K562 (cell line): ENCODE measurements at regions of chr9 and their contacts with region 1.

Region 1: GRCh38 chr9:98192503-98193335 is at the start of gene CORO2A:
- DNase-seq: peak; percentile 90 to 97 (median 96)
- ATAC-seq: peak; percentile 88
- H3K4me3 ChIP-seq: peak within 1 kb of the TSS; percentile 85
- H3K27ac ChIP-seq: peak within 1 kb of the TSS; percentile 60
- H3K4me1 ChIP-seq: peaks cover 28 to 31% of the 10 kb centered on the region in 2 experiments; a peak in 4 of 5 replicates
- H3K27me3 ChIP-seq: no peaks in the 10 kb centered on the region
- CTCF ChIP-seq: peak; percentile 79 to 84 (median 82)
- EP300 ChIP-seq: no peak
- POLR2A ChIP-seq: peak; percentile 79
- RAD21 ChIP-seq: peak; percentile 63 to 70
- polyA plus RNA-seq, gene CORO2A: 9.5 to 12.2 TPM

Region 2: GRCh38 chr9:98118640-98119601 is 73.8 kb before region 1 on chr9 and contains the start of gene TRIM14:
- CTCF ChIA-PET with region 1: interaction called, 3 read pairs
- POLR2A ChIA-PET with region 1: no interaction called
- in situ Hi-C with region 1: no loop called
- intact Hi-C with region 1: loop called (anchors 2 kb)
- DNase-seq: peak; percentile 83 to 91 (median 88)
- ATAC-seq: peak; percentile 87
- H3K4me3 ChIP-seq: peak within 1 kb of the TSS; percentile 76
- H3K27ac ChIP-seq: peak within 1 kb of the TSS; percentile 67
- H3K4me1 ChIP-seq: peaks cover 14 to 22% of the 10 kb centered on the region in 2 experiments; a peak in 4 of 5 replicates
- H3K27me3 ChIP-seq: no peaks in the 10 kb centered on the region
- CTCF ChIP-seq: peak; percentile 7 to 49 (median 42); a peak in 5 of 6 replicates
- EP300 ChIP-seq: no peak
- POLR2A ChIP-seq: peak; percentile 67
- RAD21 ChIP-seq: peak in 1 of 2 experiments; percentile 65; a peak in 3 of 4 replicates
- polyA plus RNA-seq, gene TRIM14: 7.6 to 8.3 TPM

Region 3: GRCh38 chr9:98241357-98242300 is 48.9 kb after region 1 on chr9:
- CTCF ChIA-PET with region 1: no interaction called
- POLR2A ChIA-PET with region 1: no interaction called
- in situ Hi-C with region 1: no loop called
- intact Hi-C with region 1: no loop called
- DNase-seq: peak in 2 of 4 experiments; percentile 28 to 49
- ATAC-seq: peak; percentile 76
- H3K4me3 ChIP-seq: no peak overlapping the region
- H3K27ac ChIP-seq: peak overlapping the region; percentile 21; the same call in 2 of the 3 replicates
- H3K4me1 ChIP-seq: peaks cover 23 to 38% of the 10 kb centered on the region in 2 experiments
- H3K27me3 ChIP-seq: no peaks in the 10 kb centered on the region
- CTCF ChIP-seq: peak; percentile 41 to 64 (median 54)
- EP300 ChIP-seq: no peak
- POLR2A ChIP-seq: no peak
- RAD21 ChIP-seq: peak in 1 of 2 experiments; percentile 39; a peak in 2 of 4 replicates